Head of caudate nucleus (tissue), 42 donors: ENCODE measurements at regions of chr10 and their contacts with region 1.

Region 1: DNA sequence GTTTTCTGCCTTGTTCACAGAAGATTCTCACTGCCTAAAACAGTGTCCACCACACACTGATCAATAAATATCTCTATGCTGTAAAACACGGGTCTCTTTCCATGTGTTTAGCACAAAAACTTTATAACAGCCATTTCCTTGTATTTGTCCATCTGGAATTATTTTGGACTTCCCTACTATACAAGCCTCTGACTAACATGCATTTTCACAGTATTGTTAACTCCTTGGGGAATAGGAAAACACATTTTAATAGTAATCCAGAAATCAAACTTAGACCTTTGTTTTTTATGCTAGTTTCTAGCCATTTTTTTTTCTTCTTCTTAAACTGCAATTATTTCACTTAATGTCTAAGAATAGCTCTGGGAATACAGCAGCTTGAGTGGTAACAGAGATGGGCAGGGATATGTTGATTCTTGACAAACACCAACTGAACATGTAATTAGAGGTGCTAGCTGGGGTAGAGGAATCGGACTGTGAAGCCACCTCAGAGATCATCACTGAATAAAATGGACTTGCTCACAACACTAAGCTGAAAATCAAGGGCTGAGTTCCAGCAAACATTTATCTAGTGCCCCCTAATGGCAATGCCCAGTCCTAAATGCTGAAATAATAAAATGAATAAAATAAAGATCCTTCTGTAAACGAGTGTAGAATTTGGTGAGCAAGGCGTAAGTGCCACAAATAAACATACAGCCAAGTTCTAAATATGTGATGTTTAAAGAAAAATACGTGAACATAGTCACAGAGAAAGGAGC is 593.1 kb downstream of the SORCS1 start:
- DNase-seq: peak in 28 of 42 donors; percentile 13 to 80 (median 43)

Region 2: DNA sequence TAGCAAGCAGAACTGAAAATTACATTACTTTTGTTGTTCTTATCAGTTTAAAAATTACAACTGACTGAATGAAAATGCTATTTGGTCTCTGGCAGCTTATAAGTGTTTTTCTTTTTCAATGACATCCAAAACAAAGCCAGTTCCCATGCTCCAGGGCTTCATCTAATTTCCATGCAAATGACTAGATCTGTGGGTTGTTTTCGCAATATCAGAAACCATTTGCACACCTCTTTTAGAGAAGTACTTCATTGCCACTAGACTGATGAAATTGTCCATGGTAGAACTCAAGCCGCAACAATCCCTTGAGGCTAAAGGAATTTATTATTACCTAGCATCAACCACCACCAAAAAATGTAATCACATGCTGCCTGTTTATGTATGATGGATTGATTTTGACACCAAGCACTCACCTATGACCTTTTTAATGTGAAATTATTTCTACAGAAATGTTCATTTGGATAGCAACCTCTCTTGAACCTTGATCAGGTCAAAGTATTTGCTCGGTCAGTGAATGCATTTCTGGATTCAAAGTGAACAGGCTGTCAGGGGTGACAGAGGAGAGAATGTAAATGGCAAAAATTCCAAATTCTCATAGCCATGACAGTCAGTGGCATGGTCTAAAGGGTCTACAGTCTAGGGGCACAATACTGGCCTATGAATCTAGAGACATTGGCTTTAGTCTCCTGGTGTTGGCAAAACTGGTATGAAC is 176.2 kb before region 1 on chr10:
- intact Hi-C with region 1: loop called (anchors 5 kb)
- DNase-seq: no peak